ENCODE measurements at regions of chr10 and their contacts with region 1.

Region 1: GRCh38 chr10:44325157-44325556 is 59.7 kb downstream of the CXCL12 start:
- DNase-seq: no peak
- H3K4me3 ChIP-seq: no peak overlapping the region
- H3K27ac ChIP-seq: no peak overlapping the region
- H3K4me1 ChIP-seq: no peaks in the 10 kb centered on the region
- H3K27me3 ChIP-seq: no peaks in the 10 kb centered on the region
- CTCF ChIP-seq: no peak

Region 2: DNA sequence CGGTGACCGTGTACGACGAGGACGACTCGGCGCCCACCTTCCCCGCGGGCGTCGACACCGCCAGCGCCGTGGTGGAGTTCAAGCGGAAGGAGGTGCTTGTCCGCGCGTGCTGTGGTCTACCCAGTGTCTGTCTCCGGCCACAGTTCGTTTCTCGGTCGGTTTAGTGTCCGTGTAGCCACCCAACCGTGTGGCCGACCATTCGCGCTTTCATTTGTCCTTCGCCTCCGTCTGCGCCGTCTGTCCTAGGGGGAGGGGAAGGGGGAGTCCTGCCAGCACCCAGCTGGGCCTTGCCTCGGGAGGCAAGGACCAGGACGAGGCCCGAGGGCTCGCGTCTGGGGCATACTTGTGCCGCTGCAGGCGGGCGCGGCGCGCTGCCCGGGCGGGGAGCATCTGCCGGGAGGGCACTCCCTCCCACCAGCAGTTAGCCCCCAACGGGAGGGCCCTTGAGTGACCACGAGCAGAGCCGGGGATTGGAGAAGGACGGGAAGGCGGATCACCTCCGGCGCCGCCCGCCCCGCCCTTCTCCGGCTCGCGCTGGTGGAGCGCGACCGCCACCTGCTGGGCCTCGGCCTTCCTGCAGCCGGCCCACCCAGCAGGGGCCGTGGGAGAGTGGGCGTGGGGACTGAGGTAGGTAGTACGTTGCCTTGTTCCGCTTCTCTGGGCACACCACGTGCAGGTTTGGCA is 1219.9 kb before region 1 on chr10:
- CTCF ChIA-PET with region 1: no interaction called
- dilution Hi-C with region 1: no loop called
- in situ Hi-C with region 1: no loop called
- intact Hi-C with region 1: no loop called
- DNase-seq: peak; percentile 59
- H3K4me3 ChIP-seq: peak overlapping the region; percentile 49 to 50 (median 49)
- H3K27ac ChIP-seq: no peak overlapping the region
- H3K4me1 ChIP-seq: peaks cover 9% of the 10 kb centered on the region
- H3K27me3 ChIP-seq: no peaks in the 10 kb centered on the region
- CTCF ChIP-seq: peak; percentile 85 to 100

Region 3: DNA sequence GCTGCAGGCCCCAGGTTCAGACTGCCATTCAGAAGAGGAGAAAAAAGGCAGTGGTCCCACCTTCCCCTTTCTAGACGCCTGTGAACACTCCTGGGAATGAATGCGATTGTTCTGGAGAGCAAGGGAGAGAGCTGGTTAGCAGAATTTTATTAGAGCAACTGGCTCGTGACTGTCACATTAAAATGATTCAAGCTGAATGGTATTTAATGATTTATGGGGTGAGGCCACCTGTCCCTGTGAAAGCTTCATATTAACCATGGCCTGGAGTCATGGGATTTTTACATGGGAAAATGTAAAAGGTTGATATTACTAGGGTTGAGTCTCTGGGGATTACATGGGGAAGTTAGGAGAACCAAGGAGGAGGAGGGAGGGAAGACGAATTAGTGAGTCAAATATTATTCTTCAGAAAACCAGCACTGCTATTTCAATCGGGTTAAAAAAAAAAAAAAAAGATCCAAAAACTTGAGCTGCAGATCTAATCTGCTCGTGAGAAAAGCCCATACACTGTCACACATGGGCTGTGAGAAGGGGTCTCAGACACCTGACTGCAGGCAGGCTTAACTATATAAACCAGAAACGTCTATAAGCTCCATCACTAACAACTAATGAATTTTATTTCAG is 51.4 kb after region 1 on chr10:
- CTCF ChIA-PET with region 1: no interaction called
- dilution Hi-C with region 1: loop called (anchors 5 kb)
- in situ Hi-C with region 1: no loop called
- intact Hi-C with region 1: no loop called
- DNase-seq: no peak
- H3K4me3 ChIP-seq: no peak overlapping the region
- H3K27ac ChIP-seq: no peak overlapping the region
- H3K4me1 ChIP-seq: no peaks in the 10 kb centered on the region
- H3K27me3 ChIP-seq: no peaks in the 10 kb centered on the region
- CTCF ChIP-seq: no peak